Gastrocnemius medialis (tissue), 4 donors: ENCODE measurements at regions of chr3 and their contacts with region 1.

Region 1: DNA sequence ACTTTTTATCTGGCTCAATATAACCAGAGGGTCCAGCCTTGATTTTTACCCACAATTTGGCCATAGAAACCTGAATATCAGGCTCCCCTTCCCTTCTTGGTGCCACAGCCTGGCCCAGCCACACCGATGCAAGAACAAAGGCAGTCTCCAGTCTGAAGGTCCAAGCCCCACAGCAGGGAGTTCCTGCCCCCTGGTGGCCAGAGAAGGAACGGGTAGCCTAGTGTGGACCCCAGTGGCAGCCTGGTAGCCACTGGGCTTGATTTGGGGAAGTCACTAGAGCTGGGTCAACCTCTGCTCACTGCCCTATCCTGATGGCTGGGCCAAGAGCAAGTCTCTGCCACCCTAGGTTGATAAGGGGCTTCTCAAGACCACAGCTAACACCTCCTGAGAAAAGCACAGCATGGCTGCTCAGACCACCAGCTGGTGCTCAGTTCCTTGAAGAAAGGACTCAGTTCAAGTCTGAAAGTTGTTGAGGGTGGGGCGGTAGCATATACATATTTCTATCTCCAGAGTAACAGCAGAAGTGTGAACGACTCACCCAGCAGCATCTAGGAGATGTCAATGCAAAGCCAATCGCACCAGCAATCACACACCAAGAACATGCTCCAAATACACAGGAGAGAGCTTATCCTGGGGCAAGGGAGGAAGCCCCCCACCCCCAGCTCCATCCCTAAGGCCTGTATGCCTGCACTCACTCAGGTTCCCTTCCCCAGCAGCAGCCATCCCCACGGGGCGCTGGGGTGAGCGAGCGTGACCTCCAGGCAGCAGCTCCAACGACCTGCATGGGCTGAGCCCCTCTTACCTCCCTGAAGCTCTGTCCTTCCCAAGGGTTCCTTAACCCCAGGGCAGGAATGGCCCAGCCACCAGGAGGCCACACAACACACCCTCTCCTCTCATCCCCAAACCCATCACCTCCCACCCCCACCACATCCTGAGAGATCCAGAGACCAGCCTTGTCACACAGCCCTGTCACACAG is 7.6 kb downstream of the PFKFB4 start:
- DNase-seq: peak; percentile 71 to 82
- ATAC-seq: peak; percentile 93 to 96
- H3K4me3 ChIP-seq: no peak overlapping the region
- H3K27ac ChIP-seq: no peak overlapping the region
- H3K4me1 ChIP-seq: peaks cover 0 to under 1% of the 10 kb centered on the region in 2 donors
- H3K27me3 ChIP-seq: no peaks in the 10 kb centered on the region
- CTCF ChIP-seq: peak; percentile 85 to 96 (median 96)
- POLR2A ChIP-seq: no peak

Region 2: DNA sequence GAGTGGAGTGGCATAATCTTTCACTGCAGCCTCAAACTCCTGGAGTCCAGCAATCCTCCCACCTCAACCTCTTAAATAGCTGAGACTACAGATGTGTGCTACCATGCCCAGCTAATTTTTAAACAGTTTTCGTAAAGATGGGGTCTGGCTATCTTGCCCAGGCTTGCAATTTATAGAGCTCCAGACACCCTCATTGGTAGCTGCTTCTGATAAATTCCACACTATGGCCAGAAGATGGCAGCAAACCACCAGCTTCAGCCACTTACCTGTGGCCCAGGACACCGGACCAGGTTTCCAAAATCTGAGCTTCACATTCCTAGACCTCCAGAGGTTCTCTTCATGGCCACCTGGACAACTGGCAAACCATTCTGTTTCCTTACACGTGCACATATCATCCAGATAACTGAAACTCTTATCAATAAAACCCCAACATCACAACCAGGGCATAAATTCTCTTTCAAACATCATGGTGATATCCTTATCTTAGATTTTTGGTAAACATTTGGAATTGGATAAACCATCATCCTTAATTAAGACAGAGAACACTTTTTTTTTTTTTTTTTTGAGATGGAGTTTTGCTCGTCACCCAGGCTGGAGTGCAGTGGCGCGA is 148.1 kb before region 1 on chr3:
- in situ Hi-C with region 1: no loop called
- intact Hi-C with region 1: loop called (anchors 5 kb)
- DNase-seq: peak in 1 of 2 donors; percentile 47
- ATAC-seq: peak; percentile 48 to 69
- H3K4me3 ChIP-seq: no peak overlapping the region
- H3K27ac ChIP-seq: no peak overlapping the region
- H3K4me1 ChIP-seq: peaks cover 0 to 5% of the 10 kb centered on the region in 2 donors
- H3K27me3 ChIP-seq: no peaks in the 10 kb centered on the region
- CTCF ChIP-seq: peak; percentile 79 to 90 (median 84)
- POLR2A ChIP-seq: no peak

Region 3: DNA sequence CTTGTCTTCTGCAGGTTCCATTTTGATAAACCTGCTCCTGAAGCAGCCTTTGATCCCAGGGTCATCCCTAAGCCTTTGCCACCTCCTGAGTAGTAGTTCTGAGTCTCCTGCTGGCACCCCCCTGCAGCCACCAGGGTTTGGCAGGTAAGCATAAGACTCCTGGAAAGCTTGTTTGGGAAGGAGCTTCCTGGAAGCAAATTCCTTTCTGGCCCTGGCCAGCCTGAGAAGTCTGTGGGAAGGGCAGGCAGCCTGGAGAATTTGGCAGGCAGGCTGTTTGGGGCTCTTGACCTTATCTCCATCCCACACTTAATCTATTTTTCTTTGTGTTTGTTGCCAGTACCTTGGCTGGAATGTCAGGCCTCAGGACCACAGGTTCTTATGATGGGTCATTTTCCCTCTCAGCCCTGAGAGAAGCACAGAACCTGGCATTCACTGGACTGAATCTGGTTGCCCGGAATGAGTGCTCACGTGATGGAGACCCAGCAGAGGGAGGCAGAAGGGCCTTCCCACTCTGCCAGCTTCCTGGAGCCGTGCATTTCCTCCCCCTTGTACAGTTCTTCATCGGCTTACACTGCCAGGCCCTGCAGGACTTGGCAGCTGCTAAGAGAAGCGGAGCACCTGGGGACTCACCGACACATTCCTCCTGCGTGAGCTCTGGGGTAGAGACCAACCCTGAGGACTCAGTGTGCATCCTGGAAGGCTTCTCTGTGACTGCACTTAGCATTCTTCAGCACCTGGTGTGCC is 89.1 kb before region 1 on chr3:
- in situ Hi-C with region 1: loop called in 3 of 4 experiments (anchors 5 to 10 kb)
- intact Hi-C with region 1: loop called (anchors 1 kb)
- DNase-seq: no peak
- ATAC-seq: no peak
- H3K4me3 ChIP-seq: no peak overlapping the region
- H3K27ac ChIP-seq: no peak overlapping the region
- H3K4me1 ChIP-seq: peaks cover 1% of the 10 kb centered on the region in 2 donors
- H3K27me3 ChIP-seq: no peaks in the 10 kb centered on the region
- CTCF ChIP-seq: no peak
- POLR2A ChIP-seq: no peak